CD14-positive monocyte (primary cell): ENCODE measurements at regions of chr10 and their contacts with region 1.

Region 1: GRCh38 chr10:60434418-60435046 is 44.9 kb upstream of the ANK3 start:
- DNase-seq: peak; percentile 4 to 17 (median 15)
- H3K4me3 ChIP-seq: no peak overlapping the region
- H3K4me3 Mint-ChIP-seq: no peak overlapping the region
- H3K27ac ChIP-seq: no peak overlapping the region
- H3K27ac Mint-ChIP-seq: no peak overlapping the region
- H3K4me1 ChIP-seq: no peaks in the 10 kb centered on the region
- H3K4me1 Mint-ChIP-seq: no peaks in the 10 kb centered on the region
- H3K27me3 ChIP-seq: no peaks in the 10 kb centered on the region
- H3K27me3 Mint-ChIP-seq: no peaks in the 10 kb centered on the region
- CTCF ChIP-seq: peak; percentile 78

Region 2: DNA sequence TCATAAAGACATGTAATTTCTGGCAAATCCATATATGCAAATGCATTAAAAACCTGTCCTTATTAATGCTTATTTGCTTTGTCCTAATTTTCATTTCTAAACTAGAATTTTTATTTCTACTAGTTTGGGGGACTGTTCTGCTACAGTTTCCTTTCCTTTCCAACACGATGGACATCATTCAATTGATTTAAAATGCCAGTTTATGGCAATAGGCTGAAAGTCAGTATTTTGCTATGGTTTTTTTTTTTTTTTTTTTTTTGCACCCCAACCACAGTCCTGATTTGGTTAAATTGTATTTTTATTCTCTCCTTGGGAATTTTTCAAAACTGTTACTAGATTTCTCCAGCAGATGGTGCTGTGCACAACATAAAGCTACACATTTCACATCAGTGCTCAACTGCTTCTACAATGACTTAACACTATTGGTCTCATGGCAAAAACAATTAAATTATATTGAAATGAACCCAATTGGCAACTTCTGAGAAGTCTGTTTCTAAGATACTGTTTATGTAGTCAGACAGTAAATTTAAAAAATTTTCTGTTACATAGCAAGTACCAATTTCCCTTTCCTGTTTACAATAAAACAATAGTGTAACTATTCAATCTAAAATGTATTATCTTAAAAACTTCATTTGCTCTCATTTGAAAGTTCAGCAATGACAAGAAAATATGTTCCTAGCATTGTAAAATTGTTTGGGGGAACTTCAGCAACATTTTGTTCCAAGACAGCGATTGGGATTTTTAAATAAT is 334.4 kb before region 1 on chr10:
- intact Hi-C with region 1: loop called in 1 of 2 experiments (anchors 10 kb)
- DNase-seq: peak; percentile 7 to 34 (median 34)
- H3K4me3 ChIP-seq: no peak overlapping the region
- H3K4me3 Mint-ChIP-seq: no peak overlapping the region
- H3K27ac ChIP-seq: no peak overlapping the region
- H3K27ac Mint-ChIP-seq: no peak overlapping the region
- H3K4me1 ChIP-seq: no peaks in the 10 kb centered on the region
- H3K4me1 Mint-ChIP-seq: no peaks in the 10 kb centered on the region
- H3K27me3 ChIP-seq: no peaks in the 10 kb centered on the region
- H3K27me3 Mint-ChIP-seq: no peaks in the 10 kb centered on the region
- CTCF ChIP-seq: peak; percentile 86

Region 3: GRCh38 chr10:60114765-60115586 is 319.6 kb before region 1 on chr10:
- intact Hi-C with region 1: loop called in 1 of 2 experiments (anchors 10 kb)
- DNase-seq: no peak
- H3K4me3 ChIP-seq: no peak overlapping the region
- H3K4me3 Mint-ChIP-seq: no peak overlapping the region
- H3K27ac ChIP-seq: no peak overlapping the region
- H3K27ac Mint-ChIP-seq: no peak overlapping the region
- H3K4me1 ChIP-seq: no peaks in the 10 kb centered on the region
- H3K4me1 Mint-ChIP-seq: no peaks in the 10 kb centered on the region
- H3K27me3 ChIP-seq: no peaks in the 10 kb centered on the region
- H3K27me3 Mint-ChIP-seq: no peaks in the 10 kb centered on the region
- CTCF ChIP-seq: peak; percentile 47

Region 4: DNA sequence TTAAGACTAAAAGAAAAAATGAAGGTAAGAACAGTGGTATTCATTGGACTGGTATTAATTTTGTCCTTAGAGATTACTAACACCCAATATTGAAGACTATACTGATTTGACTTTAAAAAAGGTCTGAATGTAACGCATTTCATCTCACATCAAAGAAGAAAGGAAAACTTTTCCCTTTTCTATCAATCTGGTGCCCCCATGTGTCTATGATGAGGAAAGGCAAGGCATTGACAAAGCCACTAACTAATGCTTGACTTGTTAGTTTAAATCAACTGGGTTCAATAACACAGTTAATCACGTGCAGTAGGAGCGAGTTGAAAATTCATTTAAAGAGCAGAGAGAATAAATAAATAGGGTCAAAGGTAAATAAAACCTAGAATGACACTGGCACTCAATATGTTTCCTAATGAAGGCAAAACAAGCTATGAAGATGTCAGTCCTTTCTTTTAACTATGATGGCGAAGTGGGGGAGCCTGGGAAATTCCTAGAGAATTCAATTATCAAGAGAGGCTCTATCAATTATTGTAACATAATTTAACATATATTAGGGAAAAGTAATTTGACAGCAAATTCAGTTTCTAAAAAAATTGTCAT is 225.8 kb before region 1 on chr10:
- intact Hi-C with region 1: loop called (anchors 10 kb)
- DNase-seq: no peak
- H3K4me3 ChIP-seq: no peak overlapping the region
- H3K4me3 Mint-ChIP-seq: no peak overlapping the region
- H3K27ac ChIP-seq: no peak overlapping the region
- H3K27ac Mint-ChIP-seq: no peak overlapping the region
- H3K4me1 ChIP-seq: peaks cover 8 to 9% of the 10 kb centered on the region in 2 donors
- H3K4me1 Mint-ChIP-seq: peaks cover 6% of the 10 kb centered on the region
- H3K27me3 ChIP-seq: no peaks in the 10 kb centered on the region
- H3K27me3 Mint-ChIP-seq: peaks cover 0 to 2% (median 0%) of the 10 kb centered on the region in 3 donors
- CTCF ChIP-seq: peak; percentile 60

Region 5: DNA sequence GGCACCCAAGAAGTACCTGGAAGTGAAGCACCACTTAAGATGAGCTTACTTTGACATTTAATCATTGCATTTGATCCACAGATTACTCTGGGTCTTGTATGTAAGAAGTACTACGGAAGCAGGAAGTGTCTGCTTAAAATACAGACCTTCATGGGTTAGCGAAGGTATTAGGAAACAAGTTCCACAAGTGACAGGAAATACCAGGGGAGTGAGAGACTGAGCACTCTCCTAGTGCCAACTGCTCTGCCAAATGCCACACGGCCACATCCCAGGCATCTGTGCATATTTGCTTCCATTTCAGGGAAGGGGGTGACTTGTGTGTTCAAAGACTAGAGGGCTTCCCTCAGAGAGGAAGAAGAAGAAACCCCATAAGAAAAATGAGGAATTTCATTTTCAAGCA is 12.3 kb after region 1 on chr10:
- intact Hi-C with region 1: no loop called
- DNase-seq: peak; percentile 6 to 18 (median 13)
- H3K4me3 ChIP-seq: peak overlapping the region in 1 of 3 experiments; percentile 31
- H3K4me3 Mint-ChIP-seq: peak overlapping the region in 1 of 2 donors; percentile 59
- H3K27ac ChIP-seq: no peak overlapping the region
- H3K27ac Mint-ChIP-seq: no peak overlapping the region
- H3K4me1 ChIP-seq: peaks cover 5 to 9% of the 10 kb centered on the region in 2 donors
- H3K4me1 Mint-ChIP-seq: peaks cover 11% of the 10 kb centered on the region
- H3K27me3 ChIP-seq: no peaks in the 10 kb centered on the region
- H3K27me3 Mint-ChIP-seq: peaks cover 0 to 6% (median 0%) of the 10 kb centered on the region in 3 donors
- CTCF ChIP-seq: no peak